ENCODE measurements at regions of chr11 and their contacts with region 1.

Region 1: GRCh38 chr11:120108154-120108865 is 29.6 kb downstream of the TRIM29 start:
- DNase-seq: no peak
- H3K4me3 ChIP-seq: no peak overlapping the region
- CTCF ChIP-seq: peak; percentile 98

Region 2: DNA sequence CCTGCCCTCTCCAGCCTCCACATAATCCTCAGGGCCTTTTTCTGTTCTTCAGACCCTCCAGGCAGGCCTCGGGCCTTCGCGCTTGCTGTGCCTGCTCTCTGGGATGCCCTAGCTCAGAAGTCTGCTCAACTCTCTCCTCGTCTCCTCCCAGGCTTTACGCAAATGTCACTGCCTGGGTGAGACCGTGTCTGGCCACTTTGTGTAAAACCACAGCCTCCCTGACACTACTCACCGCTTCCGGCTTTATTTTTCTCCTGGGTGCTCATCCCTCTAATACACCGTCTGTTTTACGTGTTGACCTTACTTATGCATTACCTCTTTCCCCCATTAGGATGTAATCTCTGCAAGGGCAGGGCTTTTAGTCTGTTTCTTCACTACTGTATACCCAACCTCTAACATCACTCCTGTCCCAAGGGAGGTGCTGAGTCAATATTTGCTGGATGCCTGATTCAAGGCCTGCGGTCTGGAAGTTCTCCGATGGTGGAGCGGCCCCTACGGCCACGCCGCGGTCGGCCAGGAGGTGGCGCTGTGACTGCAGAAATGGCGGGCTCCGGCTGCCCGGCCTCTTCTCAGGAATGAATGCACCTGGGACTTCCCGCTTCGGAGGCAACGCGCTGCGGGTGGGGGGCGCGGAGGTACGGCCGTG is 627.2 kb before region 1 on chr11:
- CTCF ChIA-PET with region 1: interaction called, 34 read pairs
- POLR2A ChIA-PET with region 1: no interaction called
- DNase-seq: peak; percentile 90
- H3K4me3 ChIP-seq: no peak overlapping the region
- CTCF ChIP-seq: peak; percentile 95

Region 3: GRCh38 chr11:119666463-119667131 is 441.7 kb before region 1 on chr11:
- CTCF ChIA-PET with region 1: interaction called, 113 read pairs
- POLR2A ChIA-PET with region 1: no interaction called
- DNase-seq: no peak
- H3K4me3 ChIP-seq: no peak overlapping the region
- CTCF ChIP-seq: peak; percentile 94

Region 4: DNA sequence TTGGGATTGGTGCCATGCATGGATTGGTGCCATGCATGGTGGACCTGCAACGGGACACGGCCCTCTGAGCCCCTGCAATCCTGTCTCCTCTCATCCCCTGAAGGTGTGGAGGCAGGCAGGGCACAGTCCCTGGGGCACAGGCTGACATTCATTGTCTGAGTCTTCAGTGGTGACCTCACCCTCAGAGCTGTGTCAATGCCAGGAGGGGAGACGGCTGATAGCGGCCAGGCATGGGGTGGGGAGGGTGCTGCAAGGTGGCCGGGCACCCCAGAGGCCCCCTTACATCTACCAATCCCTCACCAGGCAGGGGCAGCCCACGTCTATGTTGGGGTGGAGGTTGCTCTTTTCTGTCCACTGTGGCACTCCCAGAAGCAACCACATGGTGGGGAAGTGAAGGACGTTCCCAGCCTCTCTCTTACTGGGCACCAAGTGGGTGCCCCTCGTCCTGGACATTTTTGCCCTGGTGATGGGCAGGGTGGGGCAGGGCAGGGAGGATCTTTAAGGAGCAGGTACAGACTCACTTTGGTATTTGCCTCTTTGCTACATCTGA is 426.9 kb before region 1 on chr11:
- CTCF ChIA-PET with region 1: interaction called, 32 read pairs
- POLR2A ChIA-PET with region 1: no interaction called
- DNase-seq: no peak
- H3K4me3 ChIP-seq: no peak overlapping the region
- CTCF ChIP-seq: no peak

Region 5: DNA sequence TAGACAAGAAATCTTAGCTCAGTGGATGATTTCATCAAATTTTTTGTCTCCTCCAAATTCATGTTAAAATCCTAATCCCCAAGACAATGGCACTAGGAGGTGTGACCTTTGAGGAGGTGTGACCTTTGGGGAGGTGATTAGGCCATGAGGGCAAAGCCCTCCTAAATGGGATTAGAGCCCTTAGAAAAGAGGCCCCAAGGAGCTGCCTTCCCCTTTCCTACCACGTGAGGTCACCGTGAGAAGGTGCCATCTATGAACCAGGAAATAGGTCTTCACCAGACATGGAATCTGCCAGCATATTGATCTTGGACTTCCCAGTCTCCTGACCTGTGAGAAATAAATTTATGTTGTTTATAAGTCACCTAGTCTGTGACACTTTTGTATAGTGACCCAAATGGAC is 109.1 kb before region 1 on chr11:
- CTCF ChIA-PET with region 1: interaction called, 11 read pairs
- POLR2A ChIA-PET with region 1: no interaction called
- DNase-seq: no peak
- H3K4me3 ChIP-seq: no peak overlapping the region
- CTCF ChIP-seq: no peak

Region 6: DNA sequence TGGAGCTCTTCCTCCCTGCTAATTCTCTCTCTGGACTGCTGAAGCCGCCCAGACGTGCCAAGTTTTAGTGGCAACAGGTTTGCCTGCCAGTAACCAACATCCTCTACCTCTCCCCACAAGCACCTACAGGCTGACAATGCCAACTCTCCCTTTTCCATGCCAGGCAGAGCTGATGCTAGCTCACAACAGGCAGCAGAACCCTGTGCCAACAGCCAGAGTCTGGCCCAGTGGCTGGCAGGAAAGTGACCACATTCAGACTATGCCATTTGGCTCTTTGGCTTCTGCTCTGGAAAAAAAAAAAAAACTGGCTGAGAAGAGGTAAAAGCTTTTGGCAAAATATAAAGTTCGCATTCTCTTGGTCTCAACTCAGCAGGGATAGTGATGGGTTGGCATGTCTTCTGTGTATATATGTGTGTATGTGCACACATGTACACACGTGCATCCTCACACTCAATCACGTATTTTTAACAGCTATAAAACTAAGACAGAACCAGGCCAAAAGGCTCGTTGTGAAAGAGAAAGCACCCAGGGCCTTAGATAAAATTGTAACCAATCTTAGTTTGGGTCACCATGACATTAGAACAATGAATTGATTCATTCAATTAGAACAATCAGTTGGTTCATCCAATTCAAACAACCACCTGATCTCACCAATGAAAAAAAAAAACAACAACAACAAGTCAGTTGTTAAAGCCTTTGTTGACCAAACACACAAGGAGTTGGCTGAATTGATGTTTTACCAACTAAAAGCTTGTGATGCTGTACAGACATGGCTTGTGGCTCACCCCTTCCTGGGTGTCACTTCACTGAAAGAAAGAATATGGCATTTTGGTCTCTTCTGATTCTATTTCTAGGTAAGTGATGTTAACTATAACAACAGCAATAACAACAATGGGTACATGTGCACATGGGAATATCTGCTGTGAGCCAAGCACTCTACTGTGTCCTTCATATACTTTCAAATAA is 19.0 kb before region 1 on chr11:
- CTCF ChIA-PET with region 1: interaction called, 10 read pairs
- POLR2A ChIA-PET with region 1: no interaction called
- DNase-seq: no peak
- H3K4me3 ChIP-seq: no peak overlapping the region
- CTCF ChIP-seq: no peak

Region 7: GRCh38 chr11:120182790-120183491 is 74.6 kb after region 1 on chr11:
- CTCF ChIA-PET with region 1: no interaction called
- POLR2A ChIA-PET with region 1: no interaction called
- DNase-seq: no peak
- H3K4me3 ChIP-seq: no peak overlapping the region
- CTCF ChIP-seq: peak; percentile 28